GM12878 (cell line): ENCODE measurements at regions of chr17 and their contacts with region 1.

Region 1: DNA sequence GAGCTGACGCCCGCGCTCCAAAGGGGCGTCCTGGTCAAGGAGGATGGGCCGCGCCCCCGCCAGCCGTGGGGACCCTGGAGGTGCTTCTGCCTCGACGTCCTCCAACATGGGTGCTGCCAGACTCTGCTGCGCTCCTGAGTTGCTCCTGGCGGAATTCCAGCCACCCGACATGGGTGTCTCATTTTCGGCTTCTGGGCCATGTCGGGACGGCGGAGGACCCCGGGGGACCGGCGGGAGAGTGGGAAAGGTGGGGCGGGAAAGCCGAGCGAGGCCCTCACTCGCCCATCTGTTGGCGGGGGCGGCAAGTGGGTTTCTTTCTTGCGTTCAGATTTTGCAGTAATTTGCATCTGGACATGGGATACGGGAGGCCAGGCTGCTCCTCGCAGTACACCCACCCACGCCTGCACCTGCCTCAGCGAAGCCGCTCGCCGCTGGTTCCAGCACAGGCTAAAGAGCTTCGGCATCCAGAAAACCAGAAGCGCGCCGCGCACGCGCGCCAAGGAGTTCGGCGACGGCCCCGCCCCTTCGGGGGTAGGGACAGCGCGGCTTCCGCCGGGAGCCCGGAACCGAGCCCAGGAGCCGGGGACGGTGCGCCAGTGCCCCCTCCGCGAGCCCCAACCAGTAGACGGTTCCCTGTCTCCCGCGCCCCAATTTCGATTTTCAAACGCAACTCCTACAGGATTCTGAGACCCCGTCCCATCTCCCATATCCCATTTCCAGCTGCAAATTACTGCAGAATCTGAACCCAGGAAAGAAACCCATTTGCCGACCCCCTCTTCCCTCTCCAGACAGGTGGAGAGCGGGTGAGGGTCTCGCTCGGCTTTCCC is at the start of gene ARMC7:
- DNase-seq: no peak
- ATAC-seq: peak; percentile 87
- H3K4me3 ChIP-seq: peak within 1 kb of the TSS; percentile 97
- H3K27ac ChIP-seq: peak within 1 kb of the TSS; percentile 37
- H3K4me1 ChIP-seq: peaks cover 22% of the 10 kb centered on the region
- H3K27me3 ChIP-seq: no peaks in the 10 kb centered on the region; a peak in 1 of 4 replicates
- CTCF ChIP-seq: no peak
- EP300 ChIP-seq: no peak
- POLR2A ChIP-seq: peak; percentile 88
- RAD21 ChIP-seq: no peak
- polyA plus RNA-seq, gene ARMC7: 1.5 to 4.3 TPM

Region 2: DNA sequence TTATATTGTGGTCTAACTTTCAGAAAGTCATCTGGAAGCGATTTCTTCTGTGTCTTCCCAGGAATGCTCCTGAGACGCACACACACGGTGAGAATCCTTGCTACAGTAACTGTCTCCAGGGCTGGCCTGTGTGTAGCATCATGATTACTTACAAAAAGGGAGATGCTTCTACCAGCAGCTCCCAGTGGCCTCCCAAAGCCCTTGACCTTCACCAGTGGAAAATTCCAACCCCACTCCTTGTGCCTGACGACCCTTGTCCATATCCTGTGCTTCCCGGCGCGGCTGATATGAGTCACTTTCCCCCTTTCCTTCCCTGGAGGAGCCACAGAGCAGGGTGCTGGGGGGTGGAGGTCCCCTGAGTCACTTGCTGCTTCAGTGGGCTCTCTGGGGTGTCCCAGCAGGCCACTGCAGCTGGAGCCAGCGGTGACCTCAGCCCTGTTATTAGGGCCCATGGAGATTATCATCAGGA is 311.3 kb before region 1 on chr17:
- CTCF ChIA-PET with region 1: no interaction called
- POLR2A ChIA-PET with region 1: no interaction called
- RAD21 ChIA-PET with region 1: no interaction called
- SMC1A ChIA-PET with region 1: no interaction called
- in situ Hi-C with region 1: no loop called
- intact Hi-C with region 1: no loop called
- DNase-seq: no peak
- ATAC-seq: no peak
- H3K4me3 ChIP-seq: no peak overlapping the region
- H3K27ac ChIP-seq: no peak overlapping the region
- H3K4me1 ChIP-seq: no peaks in the 10 kb centered on the region
- H3K27me3 ChIP-seq: no peaks in the 10 kb centered on the region
- CTCF ChIP-seq: no peak
- EP300 ChIP-seq: no peak
- POLR2A ChIP-seq: no peak
- RAD21 ChIP-seq: no peak

Region 3: GRCh38 chr17:75046582-75047289 is 62.9 kb before region 1 on chr17 and contains the starts of genes ATP5PD and KCTD2:
- CTCF ChIA-PET with region 1: interaction called, 10 read pairs
- POLR2A ChIA-PET with region 1: interaction called, 7 read pairs
- RAD21 ChIA-PET with region 1: interaction called, 7 read pairs
- SMC1A ChIA-PET with region 1: interaction called, 5 read pairs
- in situ Hi-C with region 1: no loop called
- intact Hi-C with region 1: no loop called
- DNase-seq: peak; percentile 86
- ATAC-seq: peak; percentile 98
- H3K4me3 ChIP-seq: peak within 1 kb of the TSS; percentile 97
- H3K27ac ChIP-seq: peak within 1 kb of the TSS; percentile 71
- H3K4me1 ChIP-seq: peaks cover 3% of the 10 kb centered on the region
- H3K27me3 ChIP-seq: no peaks in the 10 kb centered on the region
- CTCF ChIP-seq: 0 out of 6 replicates have a peak, but pooled peaks of 1 of the 3 experiments have one; percentile 6
- EP300 ChIP-seq: no peak
- POLR2A ChIP-seq: peak; percentile 96
- RAD21 ChIP-seq: no peak
- polyA plus RNA-seq, gene ATP5PD: 710 to 772 TPM
- polyA plus RNA-seq, gene KCTD2: 1.5 to 2.2 TPM

Region 4: GRCh38 chr17:75077496-75078283 is 31.9 kb before region 1 on chr17:
- CTCF ChIA-PET with region 1: interaction called, 54 read pairs
- POLR2A ChIA-PET with region 1: interaction called, 5 read pairs
- RAD21 ChIA-PET with region 1: interaction called, 13 read pairs
- SMC1A ChIA-PET with region 1: interaction called, 13 read pairs
- in situ Hi-C with region 1: no loop called
- intact Hi-C with region 1: no loop called
- DNase-seq: no peak
- ATAC-seq: peak; percentile 77
- H3K4me3 ChIP-seq: peak overlapping the region; percentile 47; the same call in 1 of the 2 replicates
- H3K27ac ChIP-seq: peak overlapping the region; percentile 64
- H3K4me1 ChIP-seq: peaks cover 30% of the 10 kb centered on the region
- H3K27me3 ChIP-seq: no peaks in the 10 kb centered on the region
- CTCF ChIP-seq: peak; percentile 41 to 44 (median 42); a peak in 5 of 6 replicates
- EP300 ChIP-seq: no peak; a peak in 1 of 4 replicates
- POLR2A ChIP-seq: peak; percentile 82
- RAD21 ChIP-seq: no peak

Region 5: GRCh38 chr17:75131280-75132017 is 21.8 kb after region 1 on chr17 and contains the start of gene NT5C:
- CTCF ChIA-PET with region 1: interaction called, 167 read pairs
- POLR2A ChIA-PET with region 1: interaction called, 53 read pairs
- RAD21 ChIA-PET with region 1: interaction called, 70 read pairs
- SMC1A ChIA-PET with region 1: interaction called, 77 read pairs
- in situ Hi-C with region 1: no loop called
- intact Hi-C with region 1: loop called (anchors 1 kb)
- DNase-seq: no peak
- ATAC-seq: peak; percentile 96
- H3K4me3 ChIP-seq: peak within 1 kb of the TSS; percentile 74
- H3K27ac ChIP-seq: peak within 1 kb of the TSS; percentile 82
- H3K4me1 ChIP-seq: peaks cover 14% of the 10 kb centered on the region
- H3K27me3 ChIP-seq: no peaks in the 10 kb centered on the region
- CTCF ChIP-seq: peak; percentile 72 to 74 (median 74); a peak in 5 of 6 replicates
- EP300 ChIP-seq: no peak; a peak in 1 of 4 replicates
- POLR2A ChIP-seq: peak; percentile 96
- RAD21 ChIP-seq: peak; percentile 34; the same call in 1 of the 2 replicates
- polyA plus RNA-seq, gene NT5C: 3.7 to 9.8 TPM

Region 6: DNA sequence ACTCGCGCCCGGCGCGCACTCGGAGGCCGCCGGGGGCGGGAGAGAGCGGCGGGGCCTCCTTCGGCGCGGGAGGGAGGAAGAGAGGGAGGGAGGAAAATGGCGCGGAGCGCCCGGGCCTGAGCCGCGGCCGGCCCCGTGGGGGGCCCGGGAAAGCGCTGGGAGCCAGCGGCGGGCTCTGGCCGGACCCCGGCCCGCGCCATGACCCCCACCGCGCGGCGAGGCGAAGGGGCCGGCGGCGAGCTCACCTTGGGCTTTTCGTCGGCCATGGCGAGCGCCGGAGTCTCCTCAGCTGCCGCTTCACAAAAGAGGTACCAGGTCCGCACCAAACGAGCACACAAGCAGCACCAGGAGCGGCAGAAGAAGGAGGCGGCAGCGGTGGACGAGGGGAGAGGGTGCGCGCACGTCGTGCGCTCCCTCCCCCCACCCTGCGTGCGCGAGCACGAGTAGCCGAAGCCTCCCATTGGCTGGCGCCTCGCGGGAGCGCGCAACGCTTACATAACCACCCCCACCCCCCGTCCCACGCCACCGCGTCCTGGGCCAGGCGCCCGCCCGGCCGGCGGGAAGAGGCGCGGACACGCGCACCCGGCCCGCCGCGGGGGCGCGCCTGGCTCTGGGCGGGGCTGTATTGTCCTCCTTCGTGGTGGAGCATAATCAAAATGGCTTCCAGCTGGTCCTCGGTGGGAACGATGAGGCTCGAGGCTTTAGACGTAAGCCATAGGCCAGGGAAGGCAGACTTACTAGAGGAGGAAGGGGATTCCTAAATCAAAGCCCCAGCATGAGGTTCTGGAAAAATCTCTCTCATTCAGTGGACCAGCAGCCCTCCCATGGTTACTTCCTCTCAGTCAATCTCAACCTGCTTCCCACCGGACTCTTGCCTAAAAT is 73.2 kb after region 1 on chr17 and contains the start of gene SUMO2:
- CTCF ChIA-PET with region 1: interaction called, 19 read pairs
- POLR2A ChIA-PET with region 1: interaction called, 7 read pairs
- RAD21 ChIA-PET with region 1: interaction called, 15 read pairs
- SMC1A ChIA-PET with region 1: interaction called, 5 read pairs
- in situ Hi-C with region 1: no loop called
- intact Hi-C with region 1: no loop called
- DNase-seq: peak; percentile 85
- ATAC-seq: peak; percentile 86
- H3K4me3 ChIP-seq: peak within 1 kb of the TSS; percentile 92
- H3K27ac ChIP-seq: peak within 1 kb of the TSS; percentile 95
- H3K4me1 ChIP-seq: no peaks in the 10 kb centered on the region
- H3K27me3 ChIP-seq: no peaks in the 10 kb centered on the region
- CTCF ChIP-seq: peak; percentile 9 to 43 (median 15); a peak in 3 of 6 replicates
- EP300 ChIP-seq: no peak
- POLR2A ChIP-seq: peak; percentile 94
- RAD21 ChIP-seq: no peak
- polyA plus RNA-seq, gene SUMO2: 709 to 767 TPM

Region 7: DNA sequence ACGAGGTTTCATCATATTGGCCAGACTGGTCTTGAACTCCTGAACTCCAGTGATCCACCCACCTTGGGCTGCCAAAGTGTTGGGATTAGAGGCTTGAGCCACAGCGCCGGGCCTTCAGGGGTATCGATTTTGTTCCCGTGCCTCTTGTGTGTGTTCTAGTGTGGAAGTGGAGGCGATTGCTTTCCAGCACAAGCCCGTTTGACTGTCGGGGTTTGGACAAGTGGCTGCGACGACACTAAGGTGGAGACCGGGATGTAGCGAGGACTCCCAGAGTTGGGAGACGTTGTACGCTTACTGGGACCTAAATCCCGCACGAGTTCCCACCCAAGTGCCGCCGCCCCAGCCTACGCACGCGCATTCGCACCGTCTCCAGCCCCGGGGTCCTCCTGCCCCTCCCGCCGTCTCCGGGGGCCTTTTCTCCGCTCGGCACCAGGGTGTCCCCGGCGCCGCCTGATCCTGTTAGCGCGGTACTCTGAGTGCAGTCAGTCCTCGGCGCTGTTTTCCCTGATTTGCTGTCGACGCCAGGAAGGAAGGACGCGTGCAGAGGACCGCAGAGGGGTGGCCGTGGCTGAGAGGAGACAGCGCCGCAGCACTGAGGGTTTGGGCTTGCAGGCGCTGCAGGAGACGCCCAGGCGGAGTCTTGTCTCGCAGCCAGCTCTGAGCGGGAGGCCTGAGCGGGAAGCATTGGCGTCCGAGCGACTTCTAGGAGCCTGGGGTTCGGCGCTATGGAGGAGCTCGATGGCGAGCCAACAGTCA is 95.6 kb after region 1 on chr17 and contains the start of gene NUP85:
- CTCF ChIA-PET with region 1: interaction called, 293 read pairs
- POLR2A ChIA-PET with region 1: interaction called, 7 read pairs
- RAD21 ChIA-PET with region 1: interaction called, 131 read pairs
- SMC1A ChIA-PET with region 1: interaction called, 134 read pairs
- in situ Hi-C with region 1: loop called (anchors 5 kb)
- intact Hi-C with region 1: loop called (anchors 1 kb)
- DNase-seq: peak; percentile 66
- ATAC-seq: peak; percentile 91
- H3K4me3 ChIP-seq: peak within 1 kb of the TSS; percentile 77
- H3K27ac ChIP-seq: peak within 1 kb of the TSS; percentile 98
- H3K4me1 ChIP-seq: no peaks in the 10 kb centered on the region; the same call in 1 of the 2 replicates
- H3K27me3 ChIP-seq: no peaks in the 10 kb centered on the region
- CTCF ChIP-seq: no peak
- EP300 ChIP-seq: peak in 1 of 2 experiments; percentile 45; a peak in 1 of 4 replicates
- POLR2A ChIP-seq: peak; percentile 93
- RAD21 ChIP-seq: no peak
- polyA plus RNA-seq, gene NUP85: 127 to 135 TPM